ENCODE measurements at regions of chr3 and their contacts with region 1.

Region 1: DNA sequence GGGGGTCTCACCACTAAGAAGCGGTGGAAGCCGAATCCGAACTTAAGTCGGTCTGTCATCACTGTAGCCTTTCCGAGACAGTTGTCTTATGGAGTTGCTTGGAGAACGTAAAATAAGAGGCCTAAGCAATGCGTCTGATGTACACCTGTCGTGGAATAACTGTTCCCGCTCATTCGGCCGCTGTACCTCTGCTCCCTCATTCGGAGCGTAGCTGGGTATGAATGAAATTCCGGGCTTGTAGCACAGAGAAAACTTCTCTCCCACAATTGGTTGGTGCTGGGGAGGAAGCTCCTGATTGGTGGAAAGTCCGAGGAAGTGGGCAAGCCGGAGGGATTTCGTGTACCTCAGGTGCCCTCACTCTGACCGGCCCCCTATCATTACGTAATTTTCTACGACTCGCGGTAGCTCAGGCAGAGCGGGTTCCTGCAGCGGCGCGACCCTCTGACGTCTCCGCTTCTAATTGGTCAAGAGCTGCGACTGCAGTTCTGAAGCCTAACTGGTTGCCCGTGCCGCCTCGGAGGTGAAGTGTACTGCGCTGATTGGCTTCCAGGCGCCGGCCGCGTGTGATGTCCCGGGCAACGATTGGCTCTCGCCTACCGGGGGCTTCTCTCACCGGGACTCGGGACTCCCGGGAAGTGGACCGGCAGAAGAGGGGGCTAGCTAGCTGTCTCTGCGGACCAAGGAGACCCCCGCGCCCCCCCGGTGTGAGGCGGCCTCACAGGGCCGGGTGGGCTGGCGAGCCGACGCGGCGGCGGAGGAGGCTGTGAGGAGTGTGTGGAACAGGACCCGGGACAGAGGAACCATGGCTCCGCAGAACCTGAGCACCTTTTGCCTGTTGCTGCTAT is at the start of gene DNAJB11:
- DNase-seq: peak; percentile 99
- ATAC-seq: peak; percentile 85
- H3K4me3 ChIP-seq: peak within 1 kb of the TSS; percentile 86 to 98 (median 90)
- H3K4me3 Mint-ChIP-seq: peak within 1 kb of the TSS; percentile 98
- H3K27ac ChIP-seq: peak within 1 kb of the TSS; percentile 91 to 96
- H3K27ac Mint-ChIP-seq: peak within 1 kb of the TSS; percentile 98
- H3K4me1 ChIP-seq: peaks cover 28 to 40% of the 10 kb centered on the region in 2 donors
- H3K4me1 Mint-ChIP-seq: peaks cover 51% of the 10 kb centered on the region
- H3K27me3 ChIP-seq: no peaks in the 10 kb centered on the region
- H3K27me3 Mint-ChIP-seq: no peaks in the 10 kb centered on the region
- CTCF ChIP-seq: no peak
- total RNA-seq, gene DNAJB11: 27.7 and 28.5 TPM in 2 replicates

Region 2: GRCh38 chr3:185942907-185943759 is 627.2 kb before region 1 on chr3:
- CTCF ChIA-PET with region 1: interaction called, 14 read pairs
- POLR2A ChIA-PET with region 1: no interaction called
- intact Hi-C with region 1: loop called (anchors 1 kb)
- DNase-seq: peak; percentile 90
- ATAC-seq: peak; percentile 98
- H3K4me3 ChIP-seq: peak overlapping the region in 4 of 5 experiments; percentile 13 to 35 (median 21)
- H3K4me3 Mint-ChIP-seq: peak overlapping the region; percentile 70
- H3K27ac ChIP-seq: no peak overlapping the region
- H3K27ac Mint-ChIP-seq: peak overlapping the region; percentile 70
- H3K4me1 ChIP-seq: peaks cover 6 to 14% of the 10 kb centered on the region in 2 donors
- H3K4me1 Mint-ChIP-seq: peaks cover 14% of the 10 kb centered on the region
- H3K27me3 ChIP-seq: peaks cover 0 to 4% (median 2%) of the 10 kb centered on the region in 4 experiments
- H3K27me3 Mint-ChIP-seq: peaks cover 7% of the 10 kb centered on the region
- CTCF ChIP-seq: peak; percentile 98

Region 3: DNA sequence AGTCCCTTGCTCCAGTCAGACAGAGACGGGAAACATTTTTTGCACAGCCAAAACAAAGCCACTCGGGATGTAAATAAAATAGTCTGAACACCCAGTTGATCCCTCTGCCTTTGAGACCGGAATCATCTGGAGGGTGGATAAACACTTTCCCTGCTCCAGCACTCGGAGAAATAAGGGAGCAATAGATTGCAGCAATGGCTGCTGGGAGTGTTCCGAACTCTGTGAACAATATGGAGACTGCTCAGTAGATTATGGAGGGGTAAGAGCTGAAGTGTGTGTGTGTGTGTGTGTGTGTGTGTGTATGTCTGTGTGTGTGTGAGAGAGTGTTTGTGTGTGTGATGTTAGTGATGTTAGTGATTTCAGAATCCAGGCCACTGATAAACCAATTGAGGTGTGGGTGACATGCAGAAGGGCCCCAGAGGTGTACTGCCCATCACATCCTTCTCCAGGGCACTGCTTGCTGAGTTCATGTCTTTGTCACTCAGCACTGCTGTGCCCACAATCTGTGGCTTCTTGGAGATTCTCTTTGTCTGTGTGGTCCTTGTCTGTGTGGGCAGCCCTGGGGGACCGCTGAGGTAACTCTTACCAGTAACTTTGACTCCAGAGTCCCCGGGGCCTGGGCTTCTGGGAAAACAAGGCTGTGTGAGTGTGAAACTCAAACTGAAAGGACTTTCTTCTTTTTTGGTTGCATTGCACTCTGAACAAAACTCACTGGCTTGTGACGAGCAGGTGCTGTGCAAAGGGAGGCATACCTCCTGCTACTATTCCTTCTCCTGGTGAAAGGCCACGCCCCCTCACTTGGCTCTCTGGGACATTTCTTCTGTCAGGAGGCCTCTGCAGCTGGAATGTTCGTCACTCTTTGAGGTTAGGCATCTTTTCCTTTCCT is 49.1 kb before region 1 on chr3:
- CTCF ChIA-PET with region 1: no interaction called
- POLR2A ChIA-PET with region 1: no interaction called
- intact Hi-C with region 1: no loop called
- DNase-seq: peak; percentile 69
- ATAC-seq: peak; percentile 39
- H3K4me3 ChIP-seq: peak overlapping the region in 1 of 5 experiments; percentile 12
- H3K4me3 Mint-ChIP-seq: peak overlapping the region; percentile 30
- H3K27ac ChIP-seq: peak overlapping the region; percentile 19 to 64
- H3K27ac Mint-ChIP-seq: peak overlapping the region; percentile 88
- H3K4me1 ChIP-seq: peaks cover 52 to 59% of the 10 kb centered on the region in 2 donors
- H3K4me1 Mint-ChIP-seq: peaks cover 68% of the 10 kb centered on the region
- H3K27me3 ChIP-seq: peaks cover 0 to 4% (median 0%) of the 10 kb centered on the region in 4 experiments
- H3K27me3 Mint-ChIP-seq: peaks cover 3% of the 10 kb centered on the region
- CTCF ChIP-seq: no peak

Region 4: DNA sequence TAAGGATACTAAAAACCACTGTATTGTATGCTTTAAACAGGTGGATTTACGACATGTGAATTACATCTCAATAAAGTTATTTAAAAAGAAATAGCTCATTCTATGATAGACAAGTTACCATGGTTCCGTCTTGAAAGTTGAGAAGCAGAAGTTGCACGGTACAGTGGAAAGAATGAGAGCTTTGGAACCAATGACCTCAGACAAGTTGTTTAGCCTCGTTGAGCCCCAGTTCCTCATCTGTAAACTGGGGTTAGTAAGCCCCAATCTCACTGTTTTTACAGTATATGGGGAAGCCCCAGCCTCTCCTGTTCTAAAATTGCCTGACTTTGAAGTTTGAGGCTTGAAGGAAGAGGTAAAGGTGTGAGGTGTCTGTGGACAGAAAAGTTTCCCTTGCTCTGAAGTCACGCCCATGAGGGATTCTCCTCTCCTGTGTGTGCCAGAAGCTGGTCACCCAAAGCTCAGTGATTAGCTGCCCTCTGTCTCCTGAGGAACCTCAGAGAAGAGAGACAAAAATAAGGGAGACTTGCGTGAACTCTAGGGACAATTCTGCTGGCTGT is 36.1 kb before region 1 on chr3:
- CTCF ChIA-PET with region 1: interaction called, 14 read pairs
- POLR2A ChIA-PET with region 1: interaction called, 3 read pairs
- intact Hi-C with region 1: loop called (anchors 1 kb)
- DNase-seq: peak; percentile 92
- ATAC-seq: peak; percentile 80
- H3K4me3 ChIP-seq: peak overlapping the region in 1 of 5 experiments; percentile 18
- H3K4me3 Mint-ChIP-seq: peak overlapping the region; percentile 88
- H3K27ac ChIP-seq: peak overlapping the region; percentile 82 to 87
- H3K27ac Mint-ChIP-seq: peak overlapping the region; percentile 94
- H3K4me1 ChIP-seq: peaks cover 57 to 66% of the 10 kb centered on the region in 2 donors
- H3K4me1 Mint-ChIP-seq: peaks cover 69% of the 10 kb centered on the region
- H3K27me3 ChIP-seq: peaks cover 0 to 11% (median 5%) of the 10 kb centered on the region in 4 experiments
- H3K27me3 Mint-ChIP-seq: no peaks in the 10 kb centered on the region
- CTCF ChIP-seq: no peak

Region 5: GRCh38 chr3:186772701-186773424 is 202.5 kb after region 1 on chr3:
- CTCF ChIA-PET with region 1: no interaction called
- POLR2A ChIA-PET with region 1: no interaction called
- intact Hi-C with region 1: loop called (anchors 1 kb)
- DNase-seq: peak; percentile 87
- ATAC-seq: peak; percentile 93
- H3K4me3 ChIP-seq: peak overlapping the region; percentile 50 to 98 (median 79)
- H3K4me3 Mint-ChIP-seq: peak overlapping the region; percentile 93
- H3K27ac ChIP-seq: peak overlapping the region; percentile 69 to 87
- H3K27ac Mint-ChIP-seq: peak overlapping the region; percentile 91
- H3K4me1 ChIP-seq: peaks cover 11 to 12% of the 10 kb centered on the region in 2 donors
- H3K4me1 Mint-ChIP-seq: peaks cover 17% of the 10 kb centered on the region
- H3K27me3 ChIP-seq: no peaks in the 10 kb centered on the region
- H3K27me3 Mint-ChIP-seq: no peaks in the 10 kb centered on the region
- CTCF ChIP-seq: no peak

Region 6: GRCh38 chr3:187016639-187017345 is 446.5 kb after region 1 on chr3:
- CTCF ChIA-PET with region 1: no interaction called
- POLR2A ChIA-PET with region 1: no interaction called
- intact Hi-C with region 1: loop called (anchors 10 kb)
- DNase-seq: peak; percentile 83
- ATAC-seq: peak; percentile 58
- H3K4me3 ChIP-seq: peak overlapping the region in 2 of 5 experiments; percentile 4 to 28
- H3K4me3 Mint-ChIP-seq: peak overlapping the region; percentile 75
- H3K27ac ChIP-seq: peak overlapping the region; percentile 92 to 96
- H3K27ac Mint-ChIP-seq: peak overlapping the region; percentile 90
- H3K4me1 ChIP-seq: peaks cover 97% of the 10 kb centered on the region in 2 donors
- H3K4me1 Mint-ChIP-seq: peaks cover 92% of the 10 kb centered on the region
- H3K27me3 ChIP-seq: no peaks in the 10 kb centered on the region
- H3K27me3 Mint-ChIP-seq: no peaks in the 10 kb centered on the region
- CTCF ChIP-seq: no peak

Region 7: GRCh38 chr3:187051719-187052366 is 481.5 kb after region 1 on chr3:
- CTCF ChIA-PET with region 1: no interaction called
- POLR2A ChIA-PET with region 1: no interaction called
- intact Hi-C with region 1: no loop called
- DNase-seq: no peak
- ATAC-seq: no peak
- H3K4me3 ChIP-seq: no peak overlapping the region
- H3K4me3 Mint-ChIP-seq: no peak overlapping the region
- H3K27ac ChIP-seq: peak overlapping the region in 1 of 2 donors; percentile 56
- H3K27ac Mint-ChIP-seq: peak overlapping the region; percentile 69
- H3K4me1 ChIP-seq: peaks cover 32 to 38% of the 10 kb centered on the region in 2 donors
- H3K4me1 Mint-ChIP-seq: peaks cover 82% of the 10 kb centered on the region
- H3K27me3 ChIP-seq: no peaks in the 10 kb centered on the region
- H3K27me3 Mint-ChIP-seq: no peaks in the 10 kb centered on the region
- CTCF ChIP-seq: no peak

Measured in B cell (primary cell).